ENCODE measurements at regions of chr15 and their contacts with region 1.

Region 1: GRCh38 chr15:80776420-80777045 is 2.6 kb upstream of the CEMIP start:
- DNase-seq: peak; percentile 38 to 61 (median 39)
- H3K4me3 ChIP-seq: no peak overlapping the region
- H3K4me3 Mint-ChIP-seq: peak overlapping the region in 1 of 2 donors; percentile 60
- H3K27ac ChIP-seq: peak overlapping the region in 1 of 2 donors; percentile 28
- H3K27ac Mint-ChIP-seq: peak overlapping the region; percentile 25 to 85 (median 71)
- H3K4me1 ChIP-seq: peaks cover 33 to 44% of the 10 kb centered on the region in 2 donors
- H3K4me1 Mint-ChIP-seq: peaks cover 32% of the 10 kb centered on the region
- H3K27me3 ChIP-seq: peaks cover 33 to 36% of the 10 kb centered on the region in 2 donors
- H3K27me3 Mint-ChIP-seq: peaks cover 30 to 44% (median 41%) of the 10 kb centered on the region in 3 donors
- CTCF ChIP-seq: peak; percentile 71

Region 2: DNA sequence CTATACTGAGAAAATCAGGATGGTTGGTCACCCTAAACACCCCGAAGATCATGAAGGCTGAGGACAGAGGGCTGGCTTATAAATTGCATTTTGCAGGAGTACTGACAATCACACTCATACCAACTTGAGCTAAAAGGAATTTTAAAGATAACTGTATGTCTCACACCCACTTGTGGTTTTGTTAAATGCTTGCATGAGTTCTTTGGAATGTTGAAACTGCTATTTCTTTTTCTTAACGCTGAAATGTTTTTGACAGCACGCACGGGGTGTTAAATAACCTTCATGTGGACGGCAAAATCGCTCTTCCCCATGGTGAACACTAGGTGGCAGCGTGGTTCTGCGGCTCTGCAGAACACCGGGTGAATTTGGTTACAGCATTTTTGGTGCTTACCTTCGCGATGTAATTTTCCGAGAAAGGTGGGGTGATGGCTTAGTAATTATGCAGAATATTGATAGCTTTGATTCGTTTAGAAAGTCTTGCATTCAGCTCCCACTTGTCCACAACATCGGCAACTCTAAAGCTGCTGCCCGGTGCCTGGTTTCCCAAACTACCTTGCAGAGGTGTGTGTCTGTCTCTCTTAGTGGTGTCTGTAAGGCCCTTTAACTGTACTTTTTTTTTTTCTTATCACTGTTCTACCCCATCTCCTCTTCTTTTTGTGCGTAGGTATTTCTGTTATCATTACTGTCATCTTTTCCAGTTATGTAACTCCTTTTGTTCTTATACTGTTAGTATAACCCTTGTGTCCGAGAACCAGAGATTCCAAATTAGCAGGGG is 320.7 kb before region 1 on chr15:
- intact Hi-C with region 1: loop called (anchors 5 kb)
- DNase-seq: peak; percentile 51 to 65 (median 60)
- H3K4me3 ChIP-seq: no peak overlapping the region
- H3K4me3 Mint-ChIP-seq: peak overlapping the region in 1 of 2 donors; percentile 48
- H3K27ac ChIP-seq: no peak overlapping the region
- H3K27ac Mint-ChIP-seq: no peak overlapping the region
- H3K4me1 ChIP-seq: no peaks in the 10 kb centered on the region
- H3K4me1 Mint-ChIP-seq: peaks cover 4% of the 10 kb centered on the region
- H3K27me3 ChIP-seq: peaks cover 22 to 47% of the 10 kb centered on the region in 2 donors
- H3K27me3 Mint-ChIP-seq: peaks cover 40 to 53% (median 42%) of the 10 kb centered on the region in 3 donors
- CTCF ChIP-seq: peak; percentile 88

Region 3: DNA sequence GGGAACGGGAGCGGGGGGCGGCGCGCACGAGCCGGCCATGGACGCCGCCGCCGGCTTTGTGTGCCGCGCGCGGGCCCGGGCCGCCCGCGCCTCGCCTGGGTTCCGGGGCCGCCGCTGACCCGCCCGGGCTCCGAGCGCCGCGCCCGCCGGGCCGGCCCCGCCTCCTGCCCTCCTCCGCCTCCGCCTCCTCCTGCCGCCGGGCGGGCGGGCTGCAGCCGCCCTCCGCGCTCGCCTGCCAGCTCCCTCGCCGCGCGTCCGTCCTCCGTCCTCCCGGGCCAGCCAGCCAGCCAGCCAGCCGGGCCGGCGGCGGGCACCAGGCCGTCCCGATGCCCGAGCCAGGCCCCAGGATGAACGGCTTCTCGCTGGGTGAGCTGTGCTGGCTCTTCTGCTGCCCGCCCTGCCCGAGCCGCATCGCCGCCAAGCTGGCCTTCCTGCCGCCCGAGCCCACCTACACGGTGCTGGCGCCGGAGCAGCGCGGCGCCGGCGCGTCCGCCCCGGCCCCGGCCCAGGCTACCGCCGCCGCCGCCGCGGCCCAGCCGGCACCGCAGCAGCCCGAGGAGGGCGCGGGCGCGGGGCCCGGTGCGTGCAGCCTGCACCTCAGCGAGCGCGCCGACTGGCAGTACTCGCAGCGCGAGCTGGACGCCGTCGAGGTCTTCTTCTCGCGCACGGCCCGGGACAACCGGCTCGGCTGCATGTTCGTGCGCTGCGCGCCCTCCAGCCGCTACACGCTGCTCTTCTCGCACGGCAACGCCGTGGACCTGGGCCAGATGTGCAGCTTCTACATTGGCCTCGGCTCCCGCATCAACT is 81.2 kb before region 1 on chr15 and contains the start of gene ABHD17C:
- intact Hi-C with region 1: loop called in 1 of 2 experiments (anchors 5 kb)
- DNase-seq: peak in 2 of 3 donors; percentile 10 to 15
- H3K4me3 ChIP-seq: peak within 1 kb of the TSS; percentile 53 to 99 (median 89)
- H3K4me3 Mint-ChIP-seq: peak within 1 kb of the TSS; percentile 97
- H3K27ac ChIP-seq: no peak within 1 kb of the TSS
- H3K27ac Mint-ChIP-seq: peak within 1 kb of the TSS in 5 of 7 donors; percentile 33 to 82 (median 68)
- H3K4me1 ChIP-seq: peaks cover 17 to 24% of the 10 kb centered on the region in 2 donors
- H3K4me1 Mint-ChIP-seq: peaks cover 21% of the 10 kb centered on the region
- H3K27me3 ChIP-seq: peaks cover 0 to 9% of the 10 kb centered on the region in 2 donors
- H3K27me3 Mint-ChIP-seq: peaks cover 10 to 12% (median 11%) of the 10 kb centered on the region in 3 donors
- CTCF ChIP-seq: no peak
- polyA plus RNA-seq, gene ABHD17C: 0.48 to 0.76 (median 0.68) TPM

Measured in CD14-positive monocyte (primary cell).